ENCODE measurements at regions of chr4 and their contacts with region 1.

Region 1: GRCh38 chr4:8403173-8403753 is 37.3 kb downstream of the ACOX3 start:
- ATAC-seq: peak; percentile 89 to 99 (median 92)
- H3K4me3 ChIP-seq: no peak overlapping the region
- H3K27ac ChIP-seq: no peak overlapping the region
- H3K4me1 ChIP-seq: peaks cover 4 to 12% of the 10 kb centered on the region in 2 donors

Region 2: DNA sequence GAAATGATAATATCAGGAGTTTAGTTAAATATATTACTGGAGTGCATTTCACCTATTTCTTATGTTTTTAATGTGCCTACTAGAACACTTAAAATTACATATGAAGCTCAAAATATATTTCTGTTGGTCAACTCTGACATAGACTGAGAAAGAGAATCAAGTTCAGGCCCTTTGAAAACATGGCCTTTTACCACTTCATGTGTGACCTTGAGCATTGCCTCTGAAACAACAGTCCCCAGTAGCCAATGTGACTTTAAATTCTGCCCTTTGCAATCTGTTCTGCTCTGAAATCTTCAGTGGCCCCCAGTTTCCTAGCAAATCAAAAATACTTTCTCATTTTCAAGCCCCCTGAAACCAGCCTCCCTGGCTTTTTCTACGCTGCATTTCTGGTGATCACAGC is 1543.7 kb before region 1 on chr4:
- in situ Hi-C with region 1: no loop called
- ATAC-seq: no peak
- H3K4me3 ChIP-seq: no peak overlapping the region
- H3K27ac ChIP-seq: no peak overlapping the region
- H3K4me1 ChIP-seq: peaks cover 0 to 2% of the 10 kb centered on the region in 2 donors

Region 3: GRCh38 chr4:8241895-8242696 is 161.2 kb before region 1 on chr4:
- in situ Hi-C with region 1: loop called (anchors 5 to 25 kb)
- ATAC-seq: peak; percentile 50 to 95 (median 94)
- H3K4me3 ChIP-seq: no peak overlapping the region
- H3K27ac ChIP-seq: peak overlapping the region in 1 of 2 donors; percentile 74
- H3K4me1 ChIP-seq: peaks cover 12 to 16% of the 10 kb centered on the region in 2 donors

Region 4: GRCh38 chr4:8495851-8496202 is 92.6 kb after region 1 on chr4:
- in situ Hi-C with region 1: no loop called
- ATAC-seq: peak in 4 of 8 experiments; percentile 16 to 93 (median 70)
- H3K4me3 ChIP-seq: no peak overlapping the region
- H3K27ac ChIP-seq: no peak overlapping the region
- H3K4me1 ChIP-seq: peaks cover 0 to 3% of the 10 kb centered on the region in 2 donors